A673 (cell line): ENCODE measurements at regions of chr5 and their contacts with region 1.

Region 1: GRCh38 chr5:122515709-122516431 is 203.8 kb downstream of the SNCAIP start:
- DNase-seq: peak; percentile 65
- H3K4me3 ChIP-seq: no peak overlapping the region
- H3K27ac ChIP-seq: no peak overlapping the region
- H3K4me1 ChIP-seq: no peaks in the 10 kb centered on the region
- H3K27me3 ChIP-seq: peaks cover 12% of the 10 kb centered on the region
- CTCF ChIP-seq: peak; percentile 73

Region 2: GRCh38 chr5:121668635-121669034 is 847.2 kb before region 1 on chr5:
- CTCF ChIA-PET with region 1: no interaction called
- POLR2A ChIA-PET with region 1: no interaction called
- intact Hi-C with region 1: no loop called
- DNase-seq: no peak
- H3K4me3 ChIP-seq: no peak overlapping the region
- H3K27ac ChIP-seq: no peak overlapping the region
- H3K4me1 ChIP-seq: no peaks in the 10 kb centered on the region
- H3K27me3 ChIP-seq: no peaks in the 10 kb centered on the region
- CTCF ChIP-seq: no peak

Region 3: GRCh38 chr5:123610665-123611405 is 1095.0 kb after region 1 on chr5:
- CTCF ChIA-PET with region 1: interaction called, 7 read pairs
- POLR2A ChIA-PET with region 1: no interaction called
- intact Hi-C with region 1: loop called (anchors 5 kb)
- DNase-seq: peak; percentile 65
- H3K4me3 ChIP-seq: no peak overlapping the region
- H3K27ac ChIP-seq: no peak overlapping the region
- H3K4me1 ChIP-seq: no peaks in the 10 kb centered on the region
- H3K27me3 ChIP-seq: no peaks in the 10 kb centered on the region
- CTCF ChIP-seq: peak; percentile 95